ENCODE measurements at regions of chr18 and their contacts with region 1.

Region 1: GRCh38 chr18:55415258-55415871 is 172.6 kb downstream of the TCF4 start:
- DNase-seq: peak; percentile 88
- ATAC-seq: peak; percentile 92
- H3K4me3 ChIP-seq: no peak overlapping the region
- H3K4me3 Mint-ChIP-seq: no peak overlapping the region
- H3K27ac ChIP-seq: no peak overlapping the region
- H3K27ac Mint-ChIP-seq: no peak overlapping the region
- H3K4me1 ChIP-seq: peaks cover 7 to 9% of the 10 kb centered on the region in 2 donors
- H3K4me1 Mint-ChIP-seq: peaks cover 34% of the 10 kb centered on the region
- H3K27me3 ChIP-seq: no peaks in the 10 kb centered on the region
- H3K27me3 Mint-ChIP-seq: no peaks in the 10 kb centered on the region
- CTCF ChIP-seq: peak; percentile 99

Region 2: GRCh38 chr18:55376387-55376786 is 39.0 kb before region 1 on chr18:
- CTCF ChIA-PET with region 1: interaction called, 3 read pairs
- POLR2A ChIA-PET with region 1: no interaction called
- intact Hi-C with region 1: loop called (anchors 5 kb)
- DNase-seq: peak; percentile 76
- ATAC-seq: peak; percentile 92
- H3K4me3 ChIP-seq: no peak overlapping the region
- H3K4me3 Mint-ChIP-seq: peak overlapping the region; percentile 44
- H3K27ac ChIP-seq: peak overlapping the region; percentile 62 to 73
- H3K27ac Mint-ChIP-seq: peak overlapping the region; percentile 64
- H3K4me1 ChIP-seq: peaks cover 13 to 21% of the 10 kb centered on the region in 2 donors
- H3K4me1 Mint-ChIP-seq: peaks cover 30% of the 10 kb centered on the region
- H3K27me3 ChIP-seq: no peaks in the 10 kb centered on the region
- H3K27me3 Mint-ChIP-seq: no peaks in the 10 kb centered on the region
- CTCF ChIP-seq: no peak

Region 3: GRCh38 chr18:55477499-55477859 is 62.1 kb after region 1 on chr18:
- CTCF ChIA-PET with region 1: no interaction called
- POLR2A ChIA-PET with region 1: no interaction called
- intact Hi-C with region 1: loop called (anchors 5 kb)
- DNase-seq: peak; percentile 74
- ATAC-seq: peak; percentile 91
- H3K4me3 ChIP-seq: peak overlapping the region; percentile 47 to 92 (median 72)
- H3K4me3 Mint-ChIP-seq: peak overlapping the region; percentile 96
- H3K27ac ChIP-seq: peak overlapping the region; percentile 56 to 82
- H3K27ac Mint-ChIP-seq: peak overlapping the region; percentile 93
- H3K4me1 ChIP-seq: peaks cover 7 to 15% of the 10 kb centered on the region in 2 donors
- H3K4me1 Mint-ChIP-seq: peaks cover 24% of the 10 kb centered on the region
- H3K27me3 ChIP-seq: no peaks in the 10 kb centered on the region
- H3K27me3 Mint-ChIP-seq: no peaks in the 10 kb centered on the region
- CTCF ChIP-seq: peak; percentile 20

Region 4: DNA sequence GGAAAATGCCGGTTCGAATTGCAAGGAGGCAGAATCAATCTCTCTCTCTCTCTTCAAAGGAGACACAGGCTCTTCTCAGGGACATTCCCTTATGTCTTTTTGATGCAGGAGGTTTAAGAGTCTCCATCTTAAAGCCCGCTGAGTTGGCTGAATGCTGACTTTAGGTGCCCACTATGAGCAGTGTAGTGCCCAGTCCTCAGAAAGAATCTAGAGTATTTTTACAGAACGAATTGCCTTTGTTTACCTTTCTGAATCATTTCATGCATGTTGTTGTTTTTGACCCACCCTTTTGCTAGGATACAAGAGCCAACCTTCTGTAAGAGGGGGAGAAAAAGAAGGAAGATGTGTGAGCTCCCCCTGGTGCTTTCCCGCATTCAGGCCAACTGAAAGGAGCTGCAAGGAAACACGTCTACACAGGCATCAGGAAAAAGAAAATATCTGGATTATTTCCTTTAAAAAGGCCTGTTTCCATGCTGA is 366.2 kb after region 1 on chr18:
- CTCF ChIA-PET with region 1: interaction called, 16 read pairs
- POLR2A ChIA-PET with region 1: no interaction called
- intact Hi-C with region 1: loop called (anchors 2 kb)
- DNase-seq: peak; percentile 23
- ATAC-seq: no peak
- H3K4me3 ChIP-seq: no peak overlapping the region
- H3K4me3 Mint-ChIP-seq: peak overlapping the region; percentile 87
- H3K27ac ChIP-seq: peak overlapping the region in 1 of 2 donors; percentile 71
- H3K27ac Mint-ChIP-seq: peak overlapping the region; percentile 95
- H3K4me1 ChIP-seq: peaks cover 19 to 27% of the 10 kb centered on the region in 2 donors
- H3K4me1 Mint-ChIP-seq: peaks cover 36% of the 10 kb centered on the region
- H3K27me3 ChIP-seq: peaks cover 0 to 4% (median 0%) of the 10 kb centered on the region in 4 experiments
- H3K27me3 Mint-ChIP-seq: peaks cover 11% of the 10 kb centered on the region
- CTCF ChIP-seq: no peak

Region 5: DNA sequence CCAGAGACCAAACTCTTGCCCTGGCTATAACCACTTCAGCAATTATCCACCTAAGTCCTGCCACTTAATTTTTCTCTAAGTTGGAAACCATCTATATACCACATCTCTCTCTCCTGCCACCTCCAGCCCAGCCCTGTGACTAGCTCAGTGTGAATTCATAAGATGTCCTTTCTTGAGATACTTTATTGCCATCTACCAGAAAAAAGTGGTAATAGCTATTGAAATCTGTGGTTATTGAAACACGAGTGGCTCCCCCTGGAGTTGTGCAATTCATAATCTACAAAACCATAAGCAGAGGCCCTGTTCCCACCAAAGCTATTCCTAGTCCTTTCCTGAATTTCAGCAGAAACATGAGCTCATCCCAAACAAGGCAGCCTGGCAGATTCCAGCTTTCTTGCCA is 899.0 kb after region 1 on chr18:
- CTCF ChIA-PET with region 1: interaction called, 6 read pairs
- POLR2A ChIA-PET with region 1: no interaction called
- intact Hi-C with region 1: loop called (anchors 1 kb)
- DNase-seq: peak; percentile 39
- ATAC-seq: no peak
- H3K4me3 ChIP-seq: no peak overlapping the region
- H3K4me3 Mint-ChIP-seq: no peak overlapping the region
- H3K27ac ChIP-seq: no peak overlapping the region
- H3K27ac Mint-ChIP-seq: no peak overlapping the region
- H3K4me1 ChIP-seq: peaks cover 12 to 24% of the 10 kb centered on the region in 2 donors
- H3K4me1 Mint-ChIP-seq: peaks cover 21% of the 10 kb centered on the region
- H3K27me3 ChIP-seq: no peaks in the 10 kb centered on the region
- H3K27me3 Mint-ChIP-seq: no peaks in the 10 kb centered on the region
- CTCF ChIP-seq: peak; percentile 36

Region 6: DNA sequence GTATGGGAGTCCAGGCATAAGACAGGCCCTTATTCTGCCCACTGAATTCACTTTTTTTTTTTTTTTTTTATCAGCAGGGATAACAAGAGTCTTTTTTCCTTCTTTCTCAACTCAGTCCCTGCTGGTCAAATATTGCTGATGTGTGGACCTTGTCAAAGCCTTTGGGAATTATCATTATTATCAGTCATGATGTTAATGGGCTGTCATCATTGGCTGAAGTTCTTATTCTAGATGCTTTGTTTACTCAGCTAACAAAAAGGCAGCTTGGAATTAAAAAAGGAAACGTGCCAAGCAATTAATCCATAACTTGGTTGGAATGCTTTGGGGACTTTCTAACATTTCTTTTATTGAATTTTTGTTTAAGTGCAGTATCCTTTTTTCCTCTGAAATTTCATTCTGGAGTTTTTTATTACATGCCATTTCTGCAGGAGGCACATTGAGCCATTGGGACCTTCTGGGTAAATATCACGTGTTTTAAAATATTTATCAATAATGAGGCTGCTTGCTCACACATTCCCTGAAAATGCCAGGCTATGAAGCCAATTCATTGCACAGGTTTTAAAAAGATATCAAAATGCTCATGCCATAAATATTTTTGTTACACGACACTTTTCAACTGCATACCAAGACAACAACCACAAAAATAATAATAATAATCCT is 976.7 kb after region 1 on chr18:
- CTCF ChIA-PET with region 1: interaction called, 4 read pairs
- POLR2A ChIA-PET with region 1: no interaction called
- intact Hi-C with region 1: loop called (anchors 5 kb)
- DNase-seq: no peak
- ATAC-seq: no peak
- H3K4me3 ChIP-seq: no peak overlapping the region
- H3K4me3 Mint-ChIP-seq: no peak overlapping the region
- H3K27ac ChIP-seq: no peak overlapping the region
- H3K27ac Mint-ChIP-seq: no peak overlapping the region
- H3K4me1 ChIP-seq: no peaks in the 10 kb centered on the region
- H3K4me1 Mint-ChIP-seq: no peaks in the 10 kb centered on the region
- H3K27me3 ChIP-seq: no peaks in the 10 kb centered on the region
- H3K27me3 Mint-ChIP-seq: no peaks in the 10 kb centered on the region
- CTCF ChIP-seq: no peak